Heart right ventricle (tissue), 16 donors: ENCODE measurements at regions of chr11 and their contacts with region 1.

Region 1: GRCh38 chr11:925496-926321 is at the start of gene AP2A2:
- DNase-seq: peak; percentile 86 to 94
- ATAC-seq: peak; percentile 80 to 95 (median 86)
- H3K4me3 ChIP-seq: peak within 1 kb of the TSS; percentile 55 to 94 (median 79)
- H3K27ac ChIP-seq: peak within 1 kb of the TSS; percentile 76 to 94 (median 92)
- H3K4me1 ChIP-seq: peaks cover 4 to 55% (median 31%) of the 10 kb centered on the region in 9 donors
- H3K27me3 ChIP-seq: no peaks in the 10 kb centered on the region
- CTCF ChIP-seq: peak; percentile 63 to 93 (median 76)
- total RNA-seq, gene AP2A2: 28.9 to 58.4 (median 38.8) TPM

Region 2: GRCh38 chr11:848380-848931 is 77.3 kb before region 1 on chr11:
- intact Hi-C with region 1: loop called in 1 of 10 experiments (anchors 5 kb)
- DNase-seq: peak in 1 of 2 donors; percentile 63
- ATAC-seq: peak in 1 of 8 donors; percentile 6
- H3K4me3 ChIP-seq: peak overlapping the region in 1 of 10 donors; percentile 12
- H3K27ac ChIP-seq: no peak overlapping the region
- H3K4me1 ChIP-seq: peaks cover 34 to 90% (median 61%) of the 10 kb centered on the region in 9 donors
- H3K27me3 ChIP-seq: peaks cover 0 to 28% (median 0%) of the 10 kb centered on the region in 7 donors
- CTCF ChIP-seq: peak; percentile 77 to 96 (median 87)

Region 3: GRCh38 chr11:882596-882995 is 43.1 kb before region 1 on chr11:
- intact Hi-C with region 1: no loop called
- DNase-seq: no peak
- ATAC-seq: no peak
- H3K4me3 ChIP-seq: no peak overlapping the region
- H3K27ac ChIP-seq: no peak overlapping the region
- H3K4me1 ChIP-seq: no peaks in the 10 kb centered on the region
- H3K27me3 ChIP-seq: no peaks in the 10 kb centered on the region
- CTCF ChIP-seq: no peak

Region 4: DNA sequence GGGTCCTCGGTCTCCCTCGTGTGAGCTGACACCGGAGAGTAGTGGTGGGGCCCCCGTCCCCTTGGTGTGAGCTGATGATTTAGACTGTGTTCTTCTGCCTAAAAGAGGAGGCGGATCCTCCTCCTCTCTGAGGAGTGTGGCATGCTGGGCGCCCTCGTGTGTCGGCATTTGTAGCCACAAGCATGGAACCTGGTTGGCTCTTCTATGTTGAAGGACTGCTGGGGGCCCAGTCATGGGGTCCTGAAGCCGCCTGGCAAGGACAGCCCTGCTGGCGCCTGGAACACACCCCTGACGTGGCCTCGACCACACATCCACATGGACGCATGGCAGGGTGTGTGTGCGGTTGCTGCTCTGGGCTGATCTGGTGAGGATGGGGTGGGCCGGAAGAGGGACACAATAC is 50.1 kb after region 1 on chr11:
- intact Hi-C with region 1: loop called in 1 of 10 experiments (anchors 5 kb)
- DNase-seq: no peak
- ATAC-seq: peak in 1 of 8 donors; percentile 8
- H3K4me3 ChIP-seq: no peak overlapping the region
- H3K27ac ChIP-seq: no peak overlapping the region
- H3K4me1 ChIP-seq: peaks cover 0 to 21% (median 0%) of the 10 kb centered on the region in 9 donors
- H3K27me3 ChIP-seq: no peaks in the 10 kb centered on the region
- CTCF ChIP-seq: peak in 2 of 9 donors; percentile 4 to 14

Region 5: DNA sequence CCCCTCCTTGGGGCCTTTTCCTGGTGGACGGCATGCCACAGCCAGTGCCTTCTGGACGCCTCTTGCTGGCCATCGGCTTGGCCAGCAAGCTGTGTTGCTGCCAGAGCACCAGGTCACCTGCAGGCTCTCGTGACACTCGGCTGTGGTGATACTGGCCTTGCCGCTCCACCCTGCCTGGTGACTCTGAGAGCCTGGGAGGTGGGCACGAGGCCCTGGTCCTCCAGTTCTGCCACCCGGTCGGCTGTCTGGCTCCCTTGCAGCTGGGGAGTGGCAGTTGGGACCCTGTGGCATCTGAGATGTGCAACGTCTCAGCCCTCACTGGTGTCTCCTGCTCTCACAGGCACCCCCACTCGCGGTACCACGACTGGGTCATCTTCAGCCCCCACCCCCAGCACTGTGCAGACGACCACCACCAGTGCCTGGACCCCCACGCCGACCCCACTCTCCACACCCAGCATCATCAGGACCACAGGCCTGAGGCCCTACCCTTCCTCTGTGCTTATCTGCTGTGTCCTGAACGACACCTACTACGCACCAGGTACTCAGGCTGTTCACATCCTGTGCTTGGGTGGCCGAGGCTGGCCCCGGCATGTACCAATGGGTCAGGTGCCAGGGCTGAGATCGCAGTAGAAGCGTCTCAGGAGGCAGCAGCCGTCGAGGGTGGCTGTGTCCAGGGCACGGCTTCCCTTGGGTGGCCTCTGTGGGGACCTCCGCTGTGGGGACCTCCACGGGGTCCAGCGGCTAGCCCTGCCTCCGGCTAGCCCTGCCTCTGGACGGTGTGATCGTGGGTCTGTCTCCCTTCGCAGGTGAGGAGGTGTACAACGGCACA is 174.9 kb after region 1 on chr11:
- intact Hi-C with region 1: no loop called
- DNase-seq: no peak
- ATAC-seq: no peak
- H3K4me3 ChIP-seq: no peak overlapping the region
- H3K27ac ChIP-seq: no peak overlapping the region
- H3K4me1 ChIP-seq: no peaks in the 10 kb centered on the region
- H3K27me3 ChIP-seq: no peaks in the 10 kb centered on the region
- CTCF ChIP-seq: no peak